ENCODE measurements at regions of chr1 and their contacts with region 1.

Region 1: DNA sequence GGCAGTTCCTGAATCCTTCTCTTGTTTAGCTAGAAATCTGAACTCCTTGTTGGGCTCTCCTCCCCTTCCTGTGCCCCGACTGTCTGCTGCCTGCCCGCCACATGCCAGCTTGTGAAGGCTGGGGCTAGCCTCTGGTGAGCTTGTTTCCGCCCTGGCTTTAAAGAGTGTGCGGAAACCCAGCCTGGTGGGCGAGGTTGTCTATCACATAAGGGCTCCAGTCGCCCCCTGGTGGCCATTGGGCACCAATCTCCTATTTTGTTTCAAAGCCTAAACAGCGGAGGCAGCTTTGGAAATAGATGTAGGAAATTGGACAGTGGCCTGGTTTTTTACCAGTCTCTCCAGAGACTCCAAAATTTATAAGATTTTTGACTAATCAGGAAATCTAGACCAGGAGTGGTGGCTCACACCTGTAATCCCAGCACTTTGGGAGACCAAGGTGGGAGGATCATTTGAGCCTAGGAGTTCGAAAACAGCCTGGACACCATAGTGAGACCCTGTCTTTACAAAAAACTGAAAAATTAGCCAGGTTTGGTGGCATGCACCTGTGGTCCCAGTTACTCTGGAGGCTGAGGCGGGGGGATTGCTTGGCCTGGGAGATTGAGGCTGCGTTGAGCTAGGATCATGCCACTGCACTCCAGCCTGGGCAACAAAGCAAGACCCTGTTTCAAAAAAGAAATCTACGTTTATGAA is 9.8 kb downstream of the ATP8B2 start:
- DNase-seq: peak; percentile 22
- H3K4me3 ChIP-seq: no peak overlapping the region
- H3K27me3 ChIP-seq: no peaks in the 10 kb centered on the region
- CTCF ChIP-seq: peak; percentile 86

Region 2: DNA sequence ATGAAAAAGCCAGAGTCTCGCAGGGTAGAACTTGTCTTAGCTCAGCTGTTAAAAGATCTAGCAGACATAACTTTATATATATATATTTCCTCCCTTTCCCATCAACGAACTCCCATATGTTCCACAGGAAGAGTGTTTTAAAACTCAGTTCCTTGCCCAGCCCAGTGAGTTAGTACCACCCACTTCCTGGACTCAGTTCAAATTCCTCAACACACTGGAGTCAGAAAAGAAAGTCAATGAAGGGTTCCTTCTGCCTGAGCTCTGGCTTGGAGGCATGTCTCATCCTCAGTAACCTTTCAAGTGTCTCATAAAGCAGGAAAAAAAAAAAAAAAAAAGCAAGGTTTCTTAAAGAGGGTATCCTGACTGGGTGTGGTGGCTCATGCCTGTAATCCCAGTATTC is 158.8 kb before region 1 on chr1:
- CTCF ChIA-PET with region 1: no interaction called
- POLR2A ChIA-PET with region 1: no interaction called
- DNase-seq: no peak
- H3K4me3 ChIP-seq: no peak overlapping the region
- H3K27me3 ChIP-seq: no peaks in the 10 kb centered on the region
- CTCF ChIP-seq: no peak

Region 3: DNA sequence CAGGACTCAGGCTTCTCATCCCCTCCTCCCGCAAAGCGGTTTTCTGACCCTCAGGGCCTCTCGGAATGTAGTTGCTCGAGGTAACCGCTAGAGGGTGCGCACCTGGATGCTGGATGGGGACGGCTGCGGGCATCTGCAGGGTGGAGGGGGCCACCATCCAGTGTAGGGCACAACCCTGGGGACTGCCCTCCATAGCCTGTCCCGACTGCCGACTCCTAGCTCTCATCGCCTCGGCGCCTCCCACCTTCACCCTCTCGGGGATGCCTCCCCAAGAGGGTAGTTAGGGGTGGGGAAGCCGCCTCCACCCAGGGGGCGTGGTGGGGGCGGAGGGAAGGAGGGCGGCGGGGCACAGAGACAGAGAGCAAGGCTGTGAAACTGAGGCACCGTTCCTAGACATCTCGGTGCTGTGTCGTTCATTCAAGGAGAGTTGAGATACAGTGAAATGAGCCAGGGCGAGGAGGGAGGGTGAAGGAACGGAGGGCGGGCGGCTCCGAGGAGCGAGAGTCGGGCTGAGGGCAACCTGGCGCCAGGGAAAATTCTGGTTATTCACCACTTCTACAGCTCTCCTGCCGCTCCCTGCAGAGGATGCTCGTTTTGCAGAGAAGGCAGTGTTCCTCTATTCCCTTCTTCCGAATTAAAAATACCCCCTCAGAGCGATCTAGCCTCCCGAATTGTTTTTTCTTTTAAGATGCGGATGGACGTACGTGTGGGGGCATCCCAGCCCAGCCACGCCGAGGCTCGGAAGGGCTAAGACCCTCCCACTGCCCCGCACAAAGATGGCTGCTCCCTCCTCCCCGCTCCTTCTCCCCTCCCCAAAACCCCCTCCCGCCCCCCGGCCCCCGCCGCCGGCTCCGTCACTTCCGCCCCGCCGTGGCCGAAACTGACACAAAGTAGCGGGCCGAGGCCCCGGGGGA is 10.2 kb before region 1 on chr1 and contains the start of gene ATP8B2:
- CTCF ChIA-PET with region 1: interaction called, 77 read pairs
- POLR2A ChIA-PET with region 1: no interaction called
- DNase-seq: no peak
- H3K4me3 ChIP-seq: peak within 1 kb of the TSS; percentile 76
- H3K27me3 ChIP-seq: peaks cover 6% of the 10 kb centered on the region
- CTCF ChIP-seq: peak; percentile 94
- polyA plus RNA-seq, gene ATP8B2: 48.3 and 73.3 TPM in 2 replicates

Region 4: DNA sequence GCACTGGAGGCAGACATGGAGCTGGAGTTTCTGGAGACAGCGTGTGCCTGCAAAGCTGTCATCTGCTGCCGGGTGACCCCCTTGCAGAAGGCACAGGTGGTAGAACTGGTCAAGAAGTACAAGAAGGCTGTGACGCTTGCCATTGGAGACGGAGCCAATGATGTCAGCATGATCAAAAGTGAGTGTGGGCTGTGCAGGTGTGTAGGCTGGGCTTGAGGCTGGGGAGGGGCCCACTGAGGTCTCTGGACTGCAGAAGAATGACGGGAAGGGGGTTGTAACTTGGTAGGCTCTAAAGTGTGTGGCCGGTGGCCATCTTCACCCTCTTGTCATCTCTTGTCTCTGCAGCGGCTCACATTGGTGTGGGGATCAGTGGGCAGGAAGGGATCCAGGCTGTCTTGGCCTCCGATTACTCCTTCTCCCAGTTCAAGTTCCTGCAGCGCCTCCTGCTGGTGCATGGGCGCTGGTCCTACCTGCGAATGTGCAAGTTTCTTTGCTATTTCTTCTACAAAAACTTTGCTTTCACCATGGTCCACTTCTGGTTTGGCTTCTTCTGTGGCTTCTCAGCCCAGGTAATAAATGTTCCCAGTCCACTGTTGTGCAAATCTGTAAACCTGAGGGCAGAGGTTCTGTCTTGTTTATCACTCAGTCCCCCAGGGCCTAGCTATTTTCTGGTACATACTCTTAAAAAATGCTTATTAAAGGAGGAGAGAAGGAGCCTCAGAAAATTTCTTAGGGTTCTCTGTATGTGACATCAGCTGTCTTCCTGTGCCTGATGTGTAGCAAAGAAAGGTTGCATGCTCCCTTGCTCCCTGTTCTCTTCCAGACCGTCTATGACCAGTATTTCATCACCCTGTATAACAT is 10.0 kb after region 1 on chr1:
- CTCF ChIA-PET with region 1: interaction called, 95 read pairs
- POLR2A ChIA-PET with region 1: no interaction called
- DNase-seq: no peak
- H3K4me3 ChIP-seq: no peak overlapping the region
- H3K27me3 ChIP-seq: no peaks in the 10 kb centered on the region
- CTCF ChIP-seq: peak; percentile 75

Region 5: GRCh38 chr1:154352581-154353459 is 17.6 kb after region 1 on chr1:
- CTCF ChIA-PET with region 1: interaction called, 95 read pairs
- POLR2A ChIA-PET with region 1: interaction called, 5 read pairs
- DNase-seq: no peak
- H3K4me3 ChIP-seq: peak overlapping the region; percentile 37
- H3K27me3 ChIP-seq: peaks cover 3% of the 10 kb centered on the region; the same call in 1 of the 2 replicates
- CTCF ChIP-seq: peak; percentile 12; the same call in 1 of the 2 replicates

Region 6: GRCh38 chr1:154361357-154361756 is 26.2 kb after region 1 on chr1:
- CTCF ChIA-PET with region 1: interaction called, 15 read pairs
- POLR2A ChIA-PET with region 1: no interaction called
- DNase-seq: no peak
- H3K4me3 ChIP-seq: no peak overlapping the region
- H3K27me3 ChIP-seq: no peaks in the 10 kb centered on the region
- CTCF ChIP-seq: no peak

Region 7: DNA sequence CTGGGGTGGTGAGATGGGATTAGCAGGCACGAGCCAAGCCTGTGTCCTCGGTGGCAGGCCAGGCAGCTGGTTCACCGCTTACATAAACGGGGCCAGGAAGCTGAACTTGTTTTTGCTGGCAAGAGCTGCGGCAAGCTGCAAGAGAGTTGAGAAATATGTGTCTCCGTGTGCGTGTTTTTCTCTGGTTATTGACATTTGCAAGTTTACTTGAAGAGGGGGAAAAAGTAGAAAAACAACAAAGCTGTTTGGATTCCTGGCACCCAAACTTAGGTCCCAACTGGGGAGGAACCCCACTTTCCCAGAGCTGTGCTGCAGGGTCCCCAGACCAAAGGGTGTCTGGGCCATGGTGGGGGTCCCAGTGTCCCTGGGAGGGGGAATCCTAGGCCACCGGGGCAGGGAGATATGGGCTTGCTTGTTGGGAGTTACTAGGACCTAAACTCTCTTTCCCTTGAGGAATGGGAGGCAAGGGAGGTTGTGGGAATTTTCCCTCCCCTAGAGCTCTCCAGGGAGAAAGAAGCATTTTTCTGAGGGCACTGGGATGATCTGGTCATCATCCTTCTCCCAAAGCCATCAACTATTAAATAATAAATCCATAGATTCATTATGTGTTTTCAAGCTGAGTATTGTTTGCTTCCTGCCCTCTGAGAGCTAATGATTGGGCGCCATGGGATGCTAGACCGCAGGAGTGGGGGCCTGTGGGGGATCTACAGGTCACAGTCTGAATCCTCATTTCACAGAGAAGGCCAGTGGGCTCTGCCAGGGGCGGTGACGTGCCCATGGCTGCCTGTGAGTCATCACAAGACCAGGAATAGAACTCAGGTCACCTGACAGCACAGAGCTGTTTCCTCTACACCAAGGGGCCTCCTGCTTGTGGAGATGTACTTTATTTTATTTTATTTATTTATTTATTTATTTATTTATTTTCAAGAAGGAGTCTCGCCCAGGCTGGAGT is 84.7 kb after region 1 on chr1:
- CTCF ChIA-PET with region 1: interaction called, 11 read pairs
- POLR2A ChIA-PET with region 1: no interaction called
- DNase-seq: peak; percentile 57
- H3K4me3 ChIP-seq: no peak overlapping the region
- H3K27me3 ChIP-seq: no peaks in the 10 kb centered on the region
- CTCF ChIP-seq: no peak